OCI-LY7 (cell line): ENCODE measurements at regions of chr5 and their contacts with region 1.

Region 1: DNA sequence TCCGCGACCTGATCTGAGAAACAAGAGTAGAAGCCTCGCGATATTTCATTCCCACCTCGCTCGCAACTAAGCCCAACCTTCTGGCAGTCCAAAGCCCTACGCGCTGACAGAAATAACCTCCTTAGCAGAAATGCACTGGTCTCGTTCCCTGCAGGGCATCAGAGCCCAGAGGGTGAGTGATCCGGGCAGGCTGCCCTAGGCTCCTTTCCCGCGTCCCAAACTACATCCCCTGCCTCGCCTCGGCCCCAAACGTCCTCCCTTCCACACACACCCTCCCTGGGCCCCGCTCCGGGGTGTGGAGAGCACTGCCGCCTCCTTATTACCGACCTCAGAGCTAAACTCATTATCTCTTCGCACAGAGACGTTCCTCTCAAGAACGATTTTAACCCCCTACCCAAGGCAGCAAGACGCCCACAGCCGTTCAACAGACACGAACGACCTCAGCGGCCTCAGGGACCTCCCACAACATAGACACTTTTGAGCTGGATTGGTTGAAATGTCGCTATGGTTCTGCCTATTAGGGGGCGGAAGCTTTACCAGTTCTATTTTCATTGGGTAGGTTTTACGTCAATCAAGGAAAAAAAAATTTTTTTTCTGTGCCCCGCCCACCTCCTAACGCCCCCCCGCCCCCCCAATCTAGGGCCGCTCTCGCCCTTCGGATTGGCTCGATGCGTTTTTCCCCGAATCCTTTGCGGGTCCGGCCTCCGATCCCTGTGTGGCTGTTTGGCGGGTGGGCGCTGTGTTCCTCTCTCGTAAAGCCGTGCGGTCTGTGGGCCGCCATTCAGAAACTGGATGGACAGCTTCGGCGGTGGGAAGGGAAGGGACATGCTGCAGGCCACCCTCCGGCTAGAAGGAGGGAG is at the start of gene CETN3:
- DNase-seq: peak; percentile 96
- H3K4me3 ChIP-seq: peak within 1 kb of the TSS; percentile 91
- H3K27ac ChIP-seq: peak within 1 kb of the TSS; percentile 90
- H3K4me1 ChIP-seq: peaks cover 29% of the 10 kb centered on the region
- CTCF ChIP-seq: no peak
- total RNA-seq, gene CETN3: 34.6 and 43.2 TPM in 2 replicates

Region 2: GRCh38 chr5:88660947-88661805 is 1748.4 kb before region 1 on chr5:
- CTCF ChIA-PET with region 1: no interaction called
- POLR2A ChIA-PET with region 1: interaction called, 3 read pairs
- intact Hi-C with region 1: loop called (anchors 5 kb)
- DNase-seq: peak; percentile 83
- H3K4me3 ChIP-seq: peak overlapping the region; percentile 68
- H3K27ac ChIP-seq: no peak overlapping the region
- H3K4me1 ChIP-seq: peaks cover 30% of the 10 kb centered on the region
- CTCF ChIP-seq: no peak

Region 3: GRCh38 chr5:90297045-90297764 is 112.3 kb before region 1 on chr5:
- CTCF ChIA-PET with region 1: no interaction called
- POLR2A ChIA-PET with region 1: interaction called, 11 read pairs
- intact Hi-C with region 1: no loop called
- DNase-seq: no peak
- H3K4me3 ChIP-seq: no peak overlapping the region
- H3K27ac ChIP-seq: no peak overlapping the region
- H3K4me1 ChIP-seq: no peaks in the 10 kb centered on the region
- CTCF ChIP-seq: no peak

Region 4: GRCh38 chr5:90434116-90434714 is 24.7 kb after region 1 on chr5:
- CTCF ChIA-PET with region 1: no interaction called
- POLR2A ChIA-PET with region 1: interaction called, 25 read pairs
- intact Hi-C with region 1: no loop called
- DNase-seq: peak; percentile 55
- H3K4me3 ChIP-seq: no peak overlapping the region
- H3K27ac ChIP-seq: no peak overlapping the region
- H3K4me1 ChIP-seq: no peaks in the 10 kb centered on the region
- CTCF ChIP-seq: peak; percentile 89

Region 5: GRCh38 chr5:90474235-90475109 is 64.9 kb after region 1 on chr5 and contains the starts of genes MBLAC2 and POLR3G:
- CTCF ChIA-PET with region 1: interaction called, 5 read pairs
- POLR2A ChIA-PET with region 1: interaction called, 40 read pairs
- intact Hi-C with region 1: loop called (anchors 1 kb)
- DNase-seq: peak; percentile 93
- H3K4me3 ChIP-seq: peak within 1 kb of the TSS; percentile 80
- H3K27ac ChIP-seq: peak within 1 kb of the TSS; percentile 59
- H3K4me1 ChIP-seq: peaks cover 41% of the 10 kb centered on the region
- CTCF ChIP-seq: peak; percentile 45
- total RNA-seq, gene MBLAC2: 9.1 and 9.4 TPM in 2 replicates
- total RNA-seq, gene POLR3G: 9.9 and 14.6 TPM in 2 replicates

Region 6: GRCh38 chr5:90529194-90529938 is 119.8 kb after region 1 on chr5 and contains the start of gene LYSMD3:
- CTCF ChIA-PET with region 1: interaction called, 3 read pairs
- POLR2A ChIA-PET with region 1: interaction called, 11 read pairs
- intact Hi-C with region 1: loop called (anchors 1 kb)
- DNase-seq: peak; percentile 97
- H3K4me3 ChIP-seq: peak within 1 kb of the TSS; percentile 93
- H3K27ac ChIP-seq: peak within 1 kb of the TSS; percentile 57
- H3K4me1 ChIP-seq: peaks cover 30% of the 10 kb centered on the region
- CTCF ChIP-seq: no peak
- total RNA-seq, gene LYSMD3: 5.7 and 9.5 TPM in 2 replicates

Region 7: GRCh38 chr5:91383027-91383955 is 973.7 kb after region 1 on chr5 and contains the start of gene ARRDC3:
- CTCF ChIA-PET with region 1: no interaction called
- POLR2A ChIA-PET with region 1: no interaction called
- intact Hi-C with region 1: loop called (anchors 5 kb)
- DNase-seq: peak; percentile 96
- H3K4me3 ChIP-seq: peak within 1 kb of the TSS; percentile 95
- H3K27ac ChIP-seq: peak within 1 kb of the TSS; percentile 98
- H3K4me1 ChIP-seq: peaks cover 18% of the 10 kb centered on the region
- CTCF ChIP-seq: no peak
- total RNA-seq, gene ARRDC3: 30.6 TPM in 2 replicates